ENCODE measurements at regions of chr4 and their contacts with region 1.

Region 1: GRCh38 chr4:156968479-156968984 is 3.1 kb downstream of the PDGFC start:
- DNase-seq: peak; percentile 82
- H3K4me3 Mint-ChIP-seq: peak overlapping the region; percentile 96
- H3K27ac Mint-ChIP-seq: peak overlapping the region; percentile 25
- H3K4me1 Mint-ChIP-seq: peaks cover 41% of the 10 kb centered on the region
- H3K27me3 Mint-ChIP-seq: no peaks in the 10 kb centered on the region
- CTCF ChIP-seq: peak; percentile 77

Region 2: DNA sequence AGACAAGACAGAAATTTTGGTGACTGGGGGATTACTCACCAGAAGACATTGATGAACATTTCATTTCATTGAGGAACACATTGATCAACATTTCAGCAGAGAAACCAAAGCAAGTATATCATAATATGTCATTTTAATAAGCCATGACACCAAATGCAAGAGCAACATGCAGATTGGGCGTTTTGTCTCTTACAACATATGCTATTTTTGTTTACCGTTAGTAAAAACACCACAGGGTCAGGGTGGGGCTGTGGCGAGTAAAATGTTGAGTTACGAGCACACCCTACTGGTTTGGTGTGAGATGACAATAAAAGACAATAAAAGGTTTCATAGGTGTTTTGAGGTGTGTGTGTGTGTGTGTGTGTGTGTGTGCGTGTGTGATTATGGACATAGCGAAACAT is 291.4 kb before region 1 on chr4:
- CTCF ChIA-PET with region 1: interaction called, 7 read pairs
- POLR2A ChIA-PET with region 1: no interaction called
- intact Hi-C with region 1: loop called (anchors 2 kb)
- DNase-seq: peak; percentile 61
- H3K4me3 Mint-ChIP-seq: no peak overlapping the region
- H3K27ac Mint-ChIP-seq: peak overlapping the region; percentile 21
- H3K4me1 Mint-ChIP-seq: no peaks in the 10 kb centered on the region
- H3K27me3 Mint-ChIP-seq: no peaks in the 10 kb centered on the region
- CTCF ChIP-seq: peak; percentile 25

Region 3: DNA sequence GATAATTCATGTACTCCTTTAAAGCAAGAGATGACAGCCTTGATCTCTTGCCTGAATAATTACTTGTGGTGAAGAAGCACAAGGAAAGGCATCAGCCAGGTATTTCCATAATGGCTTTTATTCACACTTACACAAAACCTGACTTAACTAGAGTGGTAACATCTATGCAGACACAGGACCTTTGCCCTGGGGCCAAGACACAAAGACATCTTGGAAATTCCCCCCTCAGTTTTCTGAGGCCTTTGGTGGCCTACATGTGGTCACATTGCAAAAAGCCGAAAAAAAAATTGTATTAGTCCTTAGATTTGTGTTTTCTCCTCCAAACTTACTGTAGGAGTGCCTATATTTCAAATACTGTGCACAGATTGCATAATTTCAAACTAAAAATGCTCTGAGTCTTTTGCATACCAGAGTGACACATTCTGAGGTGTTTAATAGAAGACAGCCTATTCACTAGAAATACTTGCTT is 169.4 kb before region 1 on chr4:
- CTCF ChIA-PET with region 1: interaction called, 11 read pairs
- POLR2A ChIA-PET with region 1: interaction called, 9 read pairs
- intact Hi-C with region 1: no loop called
- DNase-seq: peak; percentile 52
- H3K4me3 Mint-ChIP-seq: no peak overlapping the region
- H3K27ac Mint-ChIP-seq: peak overlapping the region; percentile 65
- H3K4me1 Mint-ChIP-seq: peaks cover 43% of the 10 kb centered on the region
- H3K27me3 Mint-ChIP-seq: no peaks in the 10 kb centered on the region
- CTCF ChIP-seq: no peak

Region 4: DNA sequence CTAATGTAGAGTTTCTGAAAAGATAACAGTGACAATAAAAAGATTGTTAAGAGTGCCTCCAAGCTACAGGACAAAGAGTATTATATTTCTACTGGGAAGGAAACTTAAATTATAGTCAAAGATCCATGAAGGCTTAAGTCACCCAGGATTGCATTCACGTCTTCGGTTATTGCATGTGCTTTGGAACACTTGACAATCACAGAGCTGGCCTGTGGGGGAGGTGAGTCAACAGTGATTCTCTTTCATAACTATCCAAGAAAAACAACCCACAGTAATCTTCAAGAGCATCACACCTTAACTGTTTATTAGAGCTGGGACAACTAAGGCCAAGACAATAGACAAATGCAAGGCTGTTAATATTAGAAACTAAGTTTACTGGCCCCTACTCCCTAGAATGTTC is 37.3 kb before region 1 on chr4:
- CTCF ChIA-PET with region 1: interaction called, 4 read pairs
- POLR2A ChIA-PET with region 1: interaction called, 12 read pairs
- intact Hi-C with region 1: loop called (anchors 1 kb)
- DNase-seq: peak; percentile 95
- H3K4me3 Mint-ChIP-seq: no peak overlapping the region
- H3K27ac Mint-ChIP-seq: peak overlapping the region; percentile 86
- H3K4me1 Mint-ChIP-seq: peaks cover 35% of the 10 kb centered on the region
- H3K27me3 Mint-ChIP-seq: no peaks in the 10 kb centered on the region
- CTCF ChIP-seq: no peak

Region 5: DNA sequence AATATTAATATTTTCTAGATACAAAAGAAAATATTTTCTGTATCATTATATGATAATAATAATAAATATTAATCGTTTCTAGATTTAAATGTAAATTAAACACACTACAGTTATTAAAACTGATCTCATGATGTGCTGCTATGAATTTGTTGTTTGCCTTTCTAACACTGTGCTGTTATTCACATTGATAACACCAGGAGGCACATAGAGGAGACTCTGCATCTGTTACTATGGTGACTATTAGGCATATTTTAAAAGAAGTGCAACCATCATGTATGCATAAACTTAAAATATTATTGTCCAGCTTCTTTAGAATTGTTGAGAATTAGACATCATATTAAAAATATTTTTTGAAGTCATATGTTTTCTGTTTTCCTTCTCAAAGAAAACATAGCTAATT is 14.8 kb after region 1 on chr4:
- CTCF ChIA-PET with region 1: interaction called, 6 read pairs
- POLR2A ChIA-PET with region 1: interaction called, 11 read pairs
- intact Hi-C with region 1: no loop called
- DNase-seq: peak; percentile 48
- H3K4me3 Mint-ChIP-seq: no peak overlapping the region
- H3K27ac Mint-ChIP-seq: no peak overlapping the region
- H3K4me1 Mint-ChIP-seq: no peaks in the 10 kb centered on the region
- H3K27me3 Mint-ChIP-seq: no peaks in the 10 kb centered on the region
- CTCF ChIP-seq: peak; percentile 43

Region 6: DNA sequence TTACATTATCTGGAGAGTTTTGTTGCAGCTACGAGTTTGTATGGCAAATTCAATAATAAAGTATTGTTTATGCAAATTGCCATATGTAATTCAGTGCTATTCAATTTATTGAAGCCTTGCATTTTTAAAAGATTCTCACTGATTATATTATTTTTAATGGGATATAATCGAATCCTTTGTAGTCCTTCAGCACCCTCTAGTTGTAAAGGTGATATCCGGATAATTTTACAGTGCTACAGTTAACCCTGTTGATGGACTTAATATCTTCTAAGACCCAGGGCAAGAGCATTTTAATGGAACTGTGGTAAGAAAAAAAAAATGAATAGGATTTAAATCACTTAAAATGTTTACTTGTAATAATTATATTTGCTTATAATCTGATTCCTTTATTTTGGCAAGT is 203.5 kb after region 1 on chr4:
- CTCF ChIA-PET with region 1: no interaction called
- POLR2A ChIA-PET with region 1: no interaction called
- intact Hi-C with region 1: loop called (anchors 5 kb)
- DNase-seq: peak; percentile 26
- H3K4me3 Mint-ChIP-seq: no peak overlapping the region
- H3K27ac Mint-ChIP-seq: no peak overlapping the region
- H3K4me1 Mint-ChIP-seq: no peaks in the 10 kb centered on the region
- H3K27me3 Mint-ChIP-seq: no peaks in the 10 kb centered on the region
- CTCF ChIP-seq: peak; percentile 25

Region 7: GRCh38 chr4:157700898-157701694 is 732.6 kb after region 1 on chr4:
- CTCF ChIA-PET with region 1: no interaction called
- POLR2A ChIA-PET with region 1: no interaction called
- intact Hi-C with region 1: no loop called
- DNase-seq: no peak
- H3K4me3 Mint-ChIP-seq: no peak overlapping the region
- H3K27ac Mint-ChIP-seq: no peak overlapping the region
- H3K4me1 Mint-ChIP-seq: no peaks in the 10 kb centered on the region
- H3K27me3 Mint-ChIP-seq: no peaks in the 10 kb centered on the region
- CTCF ChIP-seq: no peak

Measured in MCF 10A (cell line).